ENCODE measurements at regions of chrX and their contacts with region 1.

Region 1: DNA sequence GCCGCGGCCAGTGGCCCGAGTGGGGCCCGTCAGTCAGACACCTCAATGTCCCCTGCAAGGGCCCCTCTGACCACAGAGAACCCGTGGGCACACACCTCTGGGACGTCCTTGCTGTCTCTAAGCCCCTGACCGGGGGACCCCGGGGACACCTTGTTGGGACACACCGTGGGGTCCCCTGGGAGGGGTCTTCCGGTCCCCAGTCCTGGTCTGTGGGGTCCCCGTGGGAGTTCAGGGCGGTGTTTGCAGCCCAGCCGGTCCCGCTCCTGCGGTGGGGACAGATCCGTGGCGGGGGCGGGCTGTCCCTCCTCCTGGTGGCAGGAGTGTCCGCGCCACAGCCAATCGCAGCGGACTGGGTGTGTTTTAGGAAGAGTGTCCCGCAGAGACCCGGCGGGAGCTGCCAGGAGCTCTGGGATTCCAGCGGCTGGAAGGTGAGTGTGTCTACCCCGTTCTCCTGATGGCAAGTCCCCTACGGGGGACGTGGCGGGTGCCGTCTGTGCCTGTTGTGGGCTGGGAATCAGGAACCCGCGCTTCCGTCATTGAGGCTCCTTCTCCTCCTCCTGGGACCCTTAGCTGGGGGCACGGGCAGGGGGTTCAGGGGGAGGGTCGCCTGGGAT is 5.1 kb upstream of the PLCXD1 start:
- DNase-seq: peak; percentile 37
- ATAC-seq: peak; percentile 96
- H3K4me3 ChIP-seq: peak overlapping the region; percentile 56 to 78
- H3K27ac ChIP-seq: no peak overlapping the region; the same call in 1 of the 2 replicates
- H3K4me1 ChIP-seq: peaks cover 0 to 23% of the 10 kb centered on the region in 2 experiments; a peak in 2 of 4 replicates
- H3K27me3 ChIP-seq: no peaks in the 10 kb centered on the region
- CTCF ChIP-seq: no peak
- POLR2A ChIP-seq: peak; percentile 24
- RAD21 ChIP-seq: no peak

Region 2: GRCh38 chrX:318739-319578 is 42.9 kb after region 1 on chrX and contains the start of gene GTPBP6:
- CTCF ChIA-PET with region 1: no interaction called
- POLR2A ChIA-PET with region 1: no interaction called
- RAD21 ChIA-PET with region 1: no interaction called
- intact Hi-C with region 1: loop called (anchors 5 kb)
- DNase-seq: peak; percentile 95
- ATAC-seq: peak; percentile 81
- H3K4me3 ChIP-seq: peak within 1 kb of the TSS; percentile 72 to 76
- H3K27ac ChIP-seq: peak within 1 kb of the TSS; percentile 85
- H3K4me1 ChIP-seq: peaks cover 3 to 24% of the 10 kb centered on the region in 2 experiments
- H3K27me3 ChIP-seq: no peaks in the 10 kb centered on the region
- CTCF ChIP-seq: no peak
- POLR2A ChIP-seq: peak; percentile 8
- RAD21 ChIP-seq: no peak
- total RNA-seq, gene GTPBP6: 41.6 TPM